GM12878 (cell line): ENCODE measurements at regions of chr1 and their contacts with region 1.

Region 1: DNA sequence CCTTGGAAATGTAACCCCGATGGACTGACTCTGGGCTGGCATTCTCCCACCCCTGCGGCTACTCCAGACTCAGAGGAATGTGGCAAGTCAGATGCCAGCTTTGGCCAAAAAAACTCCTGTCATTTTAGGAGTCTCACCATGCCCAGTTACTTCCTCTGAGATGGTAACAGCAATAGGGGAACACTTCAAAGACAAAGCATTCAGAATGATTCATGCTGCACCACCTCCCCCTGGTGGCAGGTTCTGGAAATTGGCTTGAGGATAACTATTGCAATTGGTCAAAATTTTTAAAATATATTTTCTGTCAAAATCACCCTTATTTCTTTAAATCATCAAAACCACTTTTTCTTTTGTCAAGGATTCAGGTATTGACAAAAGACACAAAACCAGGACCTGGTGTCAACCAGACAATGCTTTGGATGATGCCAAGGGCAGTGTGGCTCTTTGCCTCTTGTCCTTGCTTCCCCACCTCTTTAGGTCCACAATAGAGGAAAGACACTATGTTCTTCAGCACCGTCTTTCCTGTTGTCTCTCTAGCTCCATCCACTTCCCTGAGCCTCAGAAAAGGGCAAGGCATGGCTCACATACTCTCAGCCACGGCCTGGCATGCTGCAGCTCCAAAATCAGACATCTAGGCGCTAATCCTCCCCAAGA is 9.9 kb upstream of the CDCA8 start:
- DNase-seq: no peak
- ATAC-seq: peak; percentile 94
- H3K4me3 ChIP-seq: no peak overlapping the region
- H3K27ac ChIP-seq: no peak overlapping the region; the same call in 1 of the 2 replicates
- H3K4me1 ChIP-seq: peaks cover 3% of the 10 kb centered on the region
- H3K27me3 ChIP-seq: no peaks in the 10 kb centered on the region
- CTCF ChIP-seq: peak; percentile 79 to 93 (median 85)
- EP300 ChIP-seq: no peak
- POLR2A ChIP-seq: no peak
- RAD21 ChIP-seq: peak; percentile 94

Region 2: DNA sequence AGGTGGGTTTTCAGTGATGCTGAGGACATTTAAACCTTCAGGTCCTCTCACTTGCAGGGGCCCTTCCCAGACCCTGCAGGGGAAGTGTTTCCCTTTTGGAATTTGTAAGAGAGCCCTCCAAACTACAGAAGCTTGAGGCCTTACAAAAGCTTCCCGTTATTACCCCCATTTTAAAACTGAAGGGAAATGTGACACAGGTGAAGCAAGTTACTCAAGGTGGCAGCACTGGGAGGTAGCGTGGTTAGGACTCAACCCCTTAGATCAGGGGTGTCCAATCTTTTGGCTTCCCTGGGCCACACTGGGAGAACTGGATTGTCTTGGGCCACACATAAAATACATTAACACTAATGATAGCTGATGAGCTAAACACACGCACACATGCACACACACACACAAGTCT is 223.9 kb before region 1 on chr1:
- CTCF ChIA-PET with region 1: interaction called, 33 read pairs
- POLR2A ChIA-PET with region 1: no interaction called
- RAD21 ChIA-PET with region 1: interaction called, 7 read pairs
- SMC1A ChIA-PET with region 1: interaction called, 14 read pairs
- in situ Hi-C with region 1: loop called (anchors 5 kb)
- intact Hi-C with region 1: loop called (anchors 2 kb)
- DNase-seq: no peak
- ATAC-seq: peak; percentile 33; the same call in 1 of the 3 replicates
- H3K4me3 ChIP-seq: no peak overlapping the region
- H3K27ac ChIP-seq: no peak overlapping the region
- H3K4me1 ChIP-seq: no peaks in the 10 kb centered on the region
- H3K27me3 ChIP-seq: no peaks in the 10 kb centered on the region
- CTCF ChIP-seq: peak in 2 of 3 experiments; percentile 14 to 39; a peak in 3 of 6 replicates
- EP300 ChIP-seq: no peak
- POLR2A ChIP-seq: no peak
- RAD21 ChIP-seq: 0 out of 2 replicates have a peak, but pooled peaks have one; percentile 25

Region 3: DNA sequence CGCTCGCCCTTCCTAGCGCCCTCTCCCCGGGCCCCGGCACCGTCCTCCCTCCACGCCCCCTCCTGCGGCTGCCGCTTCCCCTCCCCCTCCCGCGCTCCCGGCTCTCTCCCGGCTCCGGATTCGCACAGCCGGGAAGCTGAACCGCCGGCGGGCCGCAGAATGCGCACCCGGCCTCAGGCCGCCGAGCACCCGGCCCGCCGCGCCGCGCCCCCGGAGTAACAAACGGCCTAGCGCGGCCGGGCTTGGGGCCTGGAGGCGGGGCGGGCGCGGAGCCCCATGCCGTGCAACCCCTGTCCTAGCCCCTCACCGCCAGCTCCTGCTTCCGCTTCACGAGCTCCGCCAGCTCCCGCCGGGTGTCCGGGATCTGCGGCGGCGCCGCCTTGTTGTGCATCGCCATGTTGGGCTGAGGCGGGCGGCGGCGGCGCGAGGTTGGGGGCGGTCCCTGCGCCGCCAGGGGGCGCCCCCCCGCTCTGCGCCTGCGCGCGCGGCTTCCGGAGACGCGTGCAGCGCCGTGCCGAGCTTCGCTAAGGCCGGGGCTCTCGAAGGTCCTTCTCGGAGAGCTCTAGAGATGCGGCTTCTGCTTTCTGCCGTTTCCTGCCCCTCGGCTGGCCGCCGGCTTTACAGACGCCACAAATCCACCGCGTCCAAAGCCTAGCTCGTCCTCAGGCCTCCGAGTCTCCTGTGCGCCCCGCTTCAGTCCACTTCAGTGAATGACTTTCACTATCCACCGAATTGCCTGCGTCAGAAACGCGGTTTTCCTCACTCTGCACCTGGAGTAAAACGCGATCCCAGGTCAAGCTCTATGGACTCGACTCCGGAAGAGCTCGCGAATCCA is 167.9 kb before region 1 on chr1 and contains the start of gene MEAF6:
- CTCF ChIA-PET with region 1: interaction called, 10 read pairs
- POLR2A ChIA-PET with region 1: no interaction called
- RAD21 ChIA-PET with region 1: interaction called, 4 read pairs
- SMC1A ChIA-PET with region 1: interaction called, 3 read pairs
- in situ Hi-C with region 1: no loop called
- intact Hi-C with region 1: no loop called
- DNase-seq: no peak
- ATAC-seq: peak; percentile 98
- H3K4me3 ChIP-seq: peak within 1 kb of the TSS; percentile 82
- H3K27ac ChIP-seq: peak within 1 kb of the TSS; percentile 39
- H3K4me1 ChIP-seq: peaks cover 6% of the 10 kb centered on the region
- H3K27me3 ChIP-seq: no peaks in the 10 kb centered on the region
- CTCF ChIP-seq: peak; percentile 36 to 74 (median 55); a peak in 5 of 6 replicates
- EP300 ChIP-seq: no peak
- POLR2A ChIP-seq: peak; percentile 84
- RAD21 ChIP-seq: no peak
- polyA plus RNA-seq, gene MEAF6: 30.8 to 33.3 TPM

Region 4: GRCh38 chr1:37561133-37562132 is 121.0 kb before region 1 on chr1:
- CTCF ChIA-PET with region 1: interaction called, 46 read pairs
- POLR2A ChIA-PET with region 1: interaction called, 3 read pairs
- RAD21 ChIA-PET with region 1: interaction called, 3 read pairs
- SMC1A ChIA-PET with region 1: interaction called, 15 read pairs
- in situ Hi-C with region 1: loop called (anchors 5 kb)
- intact Hi-C with region 1: loop called (anchors 1 kb)
- DNase-seq: no peak
- ATAC-seq: peak; percentile 88
- H3K4me3 ChIP-seq: no peak overlapping the region
- H3K27ac ChIP-seq: no peak overlapping the region
- H3K4me1 ChIP-seq: 0 out of 2 replicates have a peak, but pooled peaks cover 2% of the 10 kb centered on the region
- H3K27me3 ChIP-seq: no peaks in the 10 kb centered on the region
- CTCF ChIP-seq: peak; percentile 62 to 78 (median 74)
- EP300 ChIP-seq: no peak
- POLR2A ChIP-seq: no peak
- RAD21 ChIP-seq: peak; percentile 55

Region 5: DNA sequence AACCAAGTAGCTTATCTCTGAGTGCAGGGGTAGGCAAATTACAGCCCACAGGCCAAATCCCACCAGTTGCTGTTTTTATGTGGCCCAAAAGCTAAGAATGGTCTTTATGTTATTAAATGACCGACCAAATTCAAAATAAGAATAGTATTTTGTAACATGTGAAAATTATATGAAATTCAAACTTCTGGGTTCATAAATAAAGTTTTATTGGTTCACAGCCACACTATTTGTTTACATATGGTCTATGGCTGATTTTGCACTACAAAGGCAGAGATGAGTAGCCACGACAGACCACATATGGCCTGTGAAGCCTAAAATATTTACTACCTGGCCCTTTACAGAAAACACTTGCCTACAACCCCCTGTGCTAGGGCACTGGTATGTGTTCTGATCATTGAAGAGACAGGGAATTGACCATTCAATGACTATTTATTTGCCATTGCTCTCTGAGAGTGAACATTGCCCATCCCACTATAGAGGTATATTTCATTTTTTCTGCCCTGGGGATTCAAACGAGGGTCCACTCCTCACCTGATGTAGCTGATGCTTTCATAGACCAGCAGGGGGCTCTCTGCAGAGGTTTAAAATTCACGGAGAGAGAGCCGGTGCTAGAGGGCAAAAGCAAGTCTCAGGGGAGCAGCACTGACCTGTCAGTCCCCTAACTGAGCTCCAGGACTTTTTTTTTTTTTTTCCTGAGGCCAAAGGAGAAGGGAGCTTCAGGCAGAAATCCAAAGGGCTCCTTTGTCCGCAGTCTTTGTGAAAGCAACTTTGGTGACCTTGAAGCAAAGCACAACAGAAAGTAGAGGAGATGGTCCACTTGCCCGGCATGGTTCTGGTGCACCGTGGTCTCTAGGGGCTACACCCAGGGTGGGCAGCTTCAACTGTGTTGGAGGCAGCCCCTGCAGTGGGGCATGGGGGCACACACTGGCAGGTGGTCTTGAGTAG is 79.4 kb before region 1 on chr1:
- CTCF ChIA-PET with region 1: interaction called, 521 read pairs
- POLR2A ChIA-PET with region 1: interaction called, 5 read pairs
- RAD21 ChIA-PET with region 1: interaction called, 105 read pairs
- SMC1A ChIA-PET with region 1: interaction called, 245 read pairs
- in situ Hi-C with region 1: loop called (anchors 5 kb)
- intact Hi-C with region 1: loop called (anchors 1 kb)
- DNase-seq: no peak
- ATAC-seq: peak; percentile 94
- H3K4me3 ChIP-seq: no peak overlapping the region
- H3K27ac ChIP-seq: no peak overlapping the region
- H3K4me1 ChIP-seq: no peaks in the 10 kb centered on the region
- H3K27me3 ChIP-seq: 0 out of 4 replicates have a peak, but pooled peaks cover 1 to 4% of the 10 kb centered on the region in 2 experiments
- CTCF ChIP-seq: peak; percentile 63 to 75 (median 70)
- EP300 ChIP-seq: no peak
- POLR2A ChIP-seq: no peak
- RAD21 ChIP-seq: peak; percentile 75

Region 6: DNA sequence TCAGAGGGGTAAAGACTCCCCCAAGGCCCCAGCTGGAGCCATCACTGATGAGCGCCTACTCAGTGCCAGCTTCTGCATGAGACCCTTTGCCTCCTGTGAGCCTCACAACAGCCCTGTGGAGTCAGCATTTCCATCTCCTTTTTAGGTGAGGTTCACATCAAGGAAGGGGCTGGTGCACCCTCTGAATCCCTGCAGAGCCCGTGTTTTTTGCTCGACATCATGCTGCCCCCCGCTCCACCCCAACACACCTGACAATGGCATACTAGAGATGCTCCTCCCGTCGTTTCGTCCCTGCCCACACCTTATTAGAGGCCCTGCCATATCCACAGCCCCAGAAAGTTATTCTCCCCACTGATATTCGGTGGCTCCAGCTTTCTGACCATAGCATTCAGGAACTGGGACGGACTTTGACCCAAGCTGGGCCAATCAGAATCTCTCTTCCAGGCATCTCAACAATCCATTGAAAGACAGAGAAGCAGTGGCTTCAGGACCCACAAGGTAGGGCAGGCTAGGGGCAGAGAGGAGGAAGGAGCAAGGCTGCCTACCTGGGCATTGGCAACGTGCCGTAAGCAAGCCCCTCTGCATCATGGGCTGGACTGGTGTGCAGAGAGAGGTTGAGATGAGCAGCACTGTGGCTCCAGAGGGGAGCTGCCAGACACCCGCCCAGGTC is 49.8 kb after region 1 on chr1:
- CTCF ChIA-PET with region 1: no interaction called
- POLR2A ChIA-PET with region 1: no interaction called
- RAD21 ChIA-PET with region 1: no interaction called
- SMC1A ChIA-PET with region 1: no interaction called
- in situ Hi-C with region 1: no loop called
- intact Hi-C with region 1: no loop called
- DNase-seq: no peak
- ATAC-seq: no peak
- H3K4me3 ChIP-seq: no peak overlapping the region
- H3K27ac ChIP-seq: no peak overlapping the region
- H3K4me1 ChIP-seq: no peaks in the 10 kb centered on the region
- H3K27me3 ChIP-seq: peaks cover 0 to 2% of the 10 kb centered on the region in 2 experiments
- CTCF ChIP-seq: no peak
- EP300 ChIP-seq: no peak
- POLR2A ChIP-seq: no peak
- RAD21 ChIP-seq: no peak

Region 7: GRCh38 chr1:37859507-37860345 is 177.3 kb after region 1 on chr1 and contains the start of gene MTF1:
- CTCF ChIA-PET with region 1: interaction called, 13 read pairs
- POLR2A ChIA-PET with region 1: no interaction called
- RAD21 ChIA-PET with region 1: interaction called, 8 read pairs
- SMC1A ChIA-PET with region 1: no interaction called
- in situ Hi-C with region 1: no loop called
- intact Hi-C with region 1: no loop called
- DNase-seq: peak; percentile 84
- ATAC-seq: peak; percentile 99
- H3K4me3 ChIP-seq: peak within 1 kb of the TSS; percentile 96
- H3K27ac ChIP-seq: peak within 1 kb of the TSS; percentile 88
- H3K4me1 ChIP-seq: peaks cover 14% of the 10 kb centered on the region
- H3K27me3 ChIP-seq: no peaks in the 10 kb centered on the region
- CTCF ChIP-seq: peak; percentile 87 to 91 (median 87)
- EP300 ChIP-seq: no peak; a peak in 1 of 4 replicates
- POLR2A ChIP-seq: peak; percentile 90
- RAD21 ChIP-seq: peak; percentile 59
- polyA plus RNA-seq, gene MTF1: 2.8 to 4.4 TPM